ENCODE measurements at regions of chr4 and their contacts with region 1.

Region 1: DNA sequence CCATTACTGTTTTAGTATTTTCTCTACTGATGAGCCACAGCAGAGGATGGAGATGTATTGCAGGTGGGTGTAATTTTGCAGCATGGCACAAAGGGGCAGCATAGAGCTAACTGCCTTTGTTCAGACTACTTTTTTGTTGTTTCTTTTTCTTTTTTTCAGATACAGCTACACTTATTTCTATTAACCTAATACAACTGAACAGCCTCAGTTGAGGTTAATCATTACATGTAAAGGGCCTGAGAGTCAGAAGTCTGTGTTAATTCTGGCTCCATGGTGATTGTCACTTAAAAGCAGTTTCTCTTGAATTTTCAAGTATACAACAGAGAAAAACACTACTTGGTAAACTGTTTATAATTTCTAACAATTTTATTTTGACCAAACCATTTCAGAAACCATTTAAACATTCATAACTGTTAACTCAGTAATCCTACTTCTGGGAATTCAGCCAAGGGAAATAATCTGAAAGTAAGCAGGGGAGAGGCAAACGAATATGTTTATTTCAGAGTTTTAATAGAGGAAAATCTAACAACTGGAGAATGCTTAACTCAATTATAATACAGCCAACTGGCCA is 13.9 kb upstream of the PPEF2 start:
- DNase-seq: no peak
- ATAC-seq: peak in 3 of 4 donors; percentile 63 to 67 (median 65)
- H3K4me3 ChIP-seq: no peak overlapping the region
- H3K27ac ChIP-seq: peak overlapping the region in 1 of 12 donors; percentile 66
- H3K4me1 ChIP-seq: peaks cover 0 to 9% (median 0%) of the 10 kb centered on the region in 12 donors
- H3K27me3 ChIP-seq: no peaks in the 10 kb centered on the region
- CTCF ChIP-seq: peak; percentile 49 to 87 (median 69)
- POLR2A ChIP-seq: no peak

Region 2: DNA sequence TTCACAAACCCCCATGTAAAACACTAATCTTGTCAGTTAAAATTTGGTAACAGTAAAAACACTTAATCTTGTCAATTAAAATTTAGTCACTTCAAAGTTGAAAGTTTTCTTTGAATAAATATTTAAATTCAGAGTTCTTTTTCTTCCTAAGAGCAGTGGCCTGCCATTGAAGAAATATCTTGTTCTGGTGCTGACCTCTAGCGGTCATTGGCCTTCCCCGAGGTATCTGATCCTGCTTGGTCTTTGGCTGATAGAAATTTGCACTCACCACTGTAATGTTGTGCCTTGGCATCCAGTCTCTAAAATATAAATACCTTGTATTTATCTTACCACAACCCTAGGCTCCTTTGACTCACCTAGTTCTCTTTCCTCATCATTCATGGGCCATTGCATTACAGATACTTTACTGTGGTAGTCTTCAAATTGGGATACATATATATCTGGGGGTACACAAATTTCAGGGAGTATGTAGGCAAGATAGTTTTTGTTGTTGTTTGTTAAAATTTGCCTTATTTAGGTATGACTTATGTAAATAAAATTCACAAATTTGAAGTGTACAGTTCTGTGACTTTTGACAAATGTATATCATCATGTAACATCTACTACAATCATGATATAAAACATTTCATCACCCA is 151.6 kb after region 1 on chr4:
- intact Hi-C with region 1: loop called in 4 of 10 experiments (anchors 10 kb)
- DNase-seq: peak in 4 of 5 donors; percentile 62 to 74 (median 70)
- ATAC-seq: peak; percentile 39 to 87 (median 80)
- H3K4me3 ChIP-seq: no peak overlapping the region
- H3K27ac ChIP-seq: no peak overlapping the region
- H3K4me1 ChIP-seq: peaks cover 0 to 4% (median 0%) of the 10 kb centered on the region in 12 donors
- H3K27me3 ChIP-seq: no peaks in the 10 kb centered on the region
- CTCF ChIP-seq: peak; percentile 77 to 96 (median 92)
- POLR2A ChIP-seq: no peak

Region 3: GRCh38 chr4:76074468-76074867 is 158.3 kb after region 1 on chr4 and contains the start of gene ART3:
- intact Hi-C with region 1: loop called in 4 of 10 experiments (anchors 10 kb)
- DNase-seq: peak in 4 of 5 donors; percentile 46 to 55 (median 48)
- ATAC-seq: peak; percentile 93 to 96 (median 95)
- H3K4me3 ChIP-seq: peak within 1 kb of the TSS in 9 of 12 donors; percentile 0 to 50 (median 30)
- H3K27ac ChIP-seq: peak within 1 kb of the TSS in 11 of 12 donors; percentile 10 to 76 (median 57)
- H3K4me1 ChIP-seq: peaks cover 0 to 37% (median 7%) of the 10 kb centered on the region in 12 donors
- H3K27me3 ChIP-seq: no peaks in the 10 kb centered on the region
- CTCF ChIP-seq: no peak
- POLR2A ChIP-seq: peak in 1 of 2 donors; percentile 40
- total RNA-seq, gene ART3: 38.8 to 230 (median 73.4) TPM

Measured in heart left ventricle (tissue), 16 donors.